AG04450 (cell line): ENCODE measurements at regions of chr11 and their contacts with region 1.

Region 1: GRCh38 chr11:4187055-4187988 is 92.7 kb downstream of the RRM1 start:
- DNase-seq: peak; percentile 49
- H3K4me3 ChIP-seq: peak overlapping the region; percentile 68
- H3K27ac ChIP-seq: no peak overlapping the region
- H3K27me3 ChIP-seq: peaks cover 2% of the 10 kb centered on the region
- CTCF ChIP-seq: peak; percentile 81

Region 2: DNA sequence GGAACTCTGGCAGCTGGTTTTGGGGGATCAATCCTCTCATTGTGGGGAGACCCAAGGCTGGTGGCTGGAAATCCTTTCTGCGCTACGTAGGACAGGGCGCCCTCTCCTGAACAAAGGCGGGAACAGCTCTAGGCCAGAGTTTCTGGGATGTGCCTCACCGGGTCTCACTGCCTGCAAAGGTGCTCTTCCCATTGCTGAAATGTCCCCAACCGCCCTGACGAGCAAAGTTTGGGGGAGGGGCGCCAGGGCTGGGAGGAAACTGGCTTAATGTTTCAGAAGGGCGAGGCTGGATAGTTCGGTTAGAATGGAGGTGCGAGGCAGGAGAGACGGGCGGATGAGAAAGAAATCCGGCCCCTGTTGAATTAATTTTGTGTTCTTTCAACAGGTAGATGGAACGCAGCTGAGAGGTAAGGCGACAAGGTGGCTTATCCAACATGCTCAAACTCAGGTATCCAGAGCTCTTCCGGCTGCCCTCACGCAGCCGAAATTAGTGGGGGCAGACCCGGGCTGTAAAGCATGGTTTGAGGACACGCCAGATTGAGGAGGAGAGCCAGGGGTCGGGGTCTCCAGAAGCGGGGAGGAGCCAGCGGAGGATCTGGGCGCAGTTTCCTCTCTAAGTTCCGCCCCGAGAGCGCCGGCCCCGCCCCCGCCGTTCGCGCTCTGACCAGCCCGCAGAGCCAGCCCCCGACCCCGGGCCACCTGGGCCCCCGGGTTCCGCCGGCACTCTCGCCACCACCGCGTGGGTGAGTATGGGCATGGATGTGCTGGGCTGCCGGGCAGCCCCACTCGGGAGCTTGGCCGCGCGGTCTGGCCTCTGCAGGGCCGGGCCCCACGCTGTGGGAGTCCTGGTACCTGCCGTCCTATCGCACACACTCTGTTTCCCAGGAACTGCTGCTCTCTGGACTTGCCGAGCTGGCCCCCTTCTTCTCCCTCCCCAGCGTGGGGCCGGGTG is 379.1 kb before region 1 on chr11 and contains the start of gene PGAP2:
- CTCF ChIA-PET with region 1: no interaction called
- POLR2A ChIA-PET with region 1: no interaction called
- DNase-seq: no peak
- H3K4me3 ChIP-seq: peak within 1 kb of the TSS; percentile 81
- H3K27ac ChIP-seq: no peak within 1 kb of the TSS
- H3K27me3 ChIP-seq: no peaks in the 10 kb centered on the region
- CTCF ChIP-seq: peak; percentile 82
- polyA plus RNA-seq, gene PGAP2: 20.8 and 26.3 TPM in 2 replicates

Region 3: GRCh38 chr11:4017129-4017528 is 170.2 kb before region 1 on chr11:
- CTCF ChIA-PET with region 1: no interaction called
- POLR2A ChIA-PET with region 1: no interaction called
- DNase-seq: no peak
- H3K4me3 ChIP-seq: no peak overlapping the region
- H3K27ac ChIP-seq: no peak overlapping the region
- H3K27me3 ChIP-seq: no peaks in the 10 kb centered on the region
- CTCF ChIP-seq: no peak

Region 4: DNA sequence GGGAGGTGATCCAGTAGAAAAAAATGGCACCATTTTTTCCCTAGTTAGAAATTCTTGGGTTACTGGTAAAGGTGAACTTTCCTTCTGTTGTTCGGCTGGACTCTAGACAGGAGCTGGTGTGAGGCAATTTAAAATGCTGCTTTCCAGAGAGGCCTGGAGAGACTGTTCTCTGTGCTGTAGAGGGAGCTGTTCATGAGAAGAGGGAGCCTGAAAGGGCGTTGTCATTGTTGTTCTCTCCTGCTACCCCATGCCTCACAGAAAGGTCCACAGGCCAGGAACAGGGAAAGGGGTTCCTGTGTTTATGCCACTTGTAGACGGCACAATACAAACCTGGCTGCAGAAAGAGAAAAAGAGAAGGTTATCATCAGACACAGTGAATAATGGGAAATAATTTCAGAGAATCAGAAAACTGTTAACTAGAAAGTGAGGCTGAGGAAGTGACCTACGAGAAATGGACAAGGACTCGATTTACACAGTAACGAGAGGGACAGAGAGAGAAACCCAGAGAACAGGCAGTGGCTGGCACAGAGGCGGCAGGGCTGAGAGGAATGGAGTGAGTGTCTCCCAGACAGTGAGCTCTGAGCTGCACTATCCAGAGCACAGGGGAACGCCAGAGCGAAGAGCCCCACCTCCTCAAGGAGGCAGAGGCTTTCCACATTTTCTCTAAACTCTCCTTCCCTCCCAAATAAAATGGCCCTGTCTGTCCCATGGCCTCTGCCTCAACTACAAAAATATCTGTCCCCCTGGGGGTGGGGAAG is 16.5 kb after region 1 on chr11:
- CTCF ChIA-PET with region 1: interaction called, 28 read pairs
- POLR2A ChIA-PET with region 1: no interaction called
- DNase-seq: no peak
- H3K4me3 ChIP-seq: no peak overlapping the region
- H3K27ac ChIP-seq: no peak overlapping the region
- H3K27me3 ChIP-seq: no peaks in the 10 kb centered on the region
- CTCF ChIP-seq: 0 out of 2 replicates have a peak, but pooled peaks have one; percentile 11

Region 5: GRCh38 chr11:4381901-4382300 is 194.6 kb after region 1 on chr11:
- CTCF ChIA-PET with region 1: no interaction called
- POLR2A ChIA-PET with region 1: no interaction called
- DNase-seq: no peak
- H3K4me3 ChIP-seq: no peak overlapping the region
- H3K27ac ChIP-seq: no peak overlapping the region
- H3K27me3 ChIP-seq: no peaks in the 10 kb centered on the region
- CTCF ChIP-seq: no peak

Region 6: DNA sequence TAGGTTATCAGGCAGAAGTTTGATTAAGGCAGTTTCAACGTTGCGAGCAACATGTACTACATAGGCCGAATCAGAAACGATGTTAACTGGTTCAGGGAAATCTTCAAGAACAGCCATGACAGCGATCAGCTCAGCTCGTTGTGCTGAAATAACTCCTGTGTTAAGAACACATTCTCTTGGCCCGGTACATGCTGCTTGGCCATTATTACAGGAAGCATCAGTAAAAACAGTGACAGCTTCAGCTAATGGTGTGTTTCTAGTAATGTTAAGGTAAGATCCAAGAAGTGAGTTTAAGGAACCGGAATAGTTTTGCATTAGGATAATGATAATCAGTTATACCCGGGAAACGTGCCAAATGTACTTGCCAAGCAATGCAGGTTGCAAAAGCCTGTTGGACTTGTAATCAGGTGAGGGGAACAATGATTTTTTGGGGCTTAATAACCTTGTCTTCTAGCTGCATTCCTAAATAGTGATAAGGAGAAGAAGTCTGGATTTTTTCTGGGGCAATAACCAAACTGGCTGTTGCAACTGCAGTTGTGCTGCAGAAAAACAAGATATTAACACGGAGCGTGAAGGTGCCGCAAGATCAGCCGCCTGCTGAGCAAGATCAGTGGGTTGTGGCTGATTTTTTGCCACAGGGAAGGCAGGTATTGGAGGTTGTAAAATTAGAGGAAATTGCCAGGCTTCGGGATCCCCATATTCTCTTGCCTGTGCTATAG is 309.4 kb after region 1 on chr11:
- CTCF ChIA-PET with region 1: interaction called, 119 read pairs
- POLR2A ChIA-PET with region 1: interaction called, 3 read pairs
- DNase-seq: no peak
- H3K4me3 ChIP-seq: no peak overlapping the region
- H3K27ac ChIP-seq: no peak overlapping the region
- H3K27me3 ChIP-seq: peaks cover 24% of the 10 kb centered on the region
- CTCF ChIP-seq: no peak

Region 7: DNA sequence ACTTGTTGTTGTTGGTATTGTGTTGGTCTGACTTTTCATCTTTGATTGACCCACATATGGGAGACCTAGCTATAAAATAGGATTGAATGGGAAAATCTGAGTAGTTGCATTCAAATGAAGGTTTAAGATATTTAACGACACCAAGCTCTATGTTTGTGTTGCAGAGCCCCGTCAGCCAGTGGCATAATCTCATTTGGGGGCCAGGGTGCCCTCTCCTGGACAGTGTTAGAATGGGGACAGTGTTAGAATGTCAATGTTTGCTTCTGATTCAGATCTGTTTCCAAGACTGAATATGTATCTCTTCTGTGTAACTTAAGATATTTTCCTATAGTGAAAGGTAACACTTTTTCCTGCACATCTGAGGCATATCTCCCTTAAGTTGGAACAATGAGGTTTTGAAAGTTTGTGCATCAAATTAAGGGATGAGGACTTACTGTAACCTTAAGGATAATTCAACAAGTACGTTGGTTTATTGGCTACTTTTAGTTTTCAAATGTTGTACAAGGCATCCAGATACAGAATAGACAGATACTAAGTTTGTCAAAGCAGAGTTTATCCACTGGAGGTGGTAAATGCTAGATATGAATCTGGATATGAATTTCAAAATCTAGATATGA is 352.4 kb after region 1 on chr11:
- CTCF ChIA-PET with region 1: interaction called, 311 read pairs
- POLR2A ChIA-PET with region 1: no interaction called
- DNase-seq: peak; percentile 4
- H3K4me3 ChIP-seq: no peak overlapping the region
- H3K27ac ChIP-seq: no peak overlapping the region
- H3K27me3 ChIP-seq: no peaks in the 10 kb centered on the region
- CTCF ChIP-seq: peak; percentile 65

Region 8: DNA sequence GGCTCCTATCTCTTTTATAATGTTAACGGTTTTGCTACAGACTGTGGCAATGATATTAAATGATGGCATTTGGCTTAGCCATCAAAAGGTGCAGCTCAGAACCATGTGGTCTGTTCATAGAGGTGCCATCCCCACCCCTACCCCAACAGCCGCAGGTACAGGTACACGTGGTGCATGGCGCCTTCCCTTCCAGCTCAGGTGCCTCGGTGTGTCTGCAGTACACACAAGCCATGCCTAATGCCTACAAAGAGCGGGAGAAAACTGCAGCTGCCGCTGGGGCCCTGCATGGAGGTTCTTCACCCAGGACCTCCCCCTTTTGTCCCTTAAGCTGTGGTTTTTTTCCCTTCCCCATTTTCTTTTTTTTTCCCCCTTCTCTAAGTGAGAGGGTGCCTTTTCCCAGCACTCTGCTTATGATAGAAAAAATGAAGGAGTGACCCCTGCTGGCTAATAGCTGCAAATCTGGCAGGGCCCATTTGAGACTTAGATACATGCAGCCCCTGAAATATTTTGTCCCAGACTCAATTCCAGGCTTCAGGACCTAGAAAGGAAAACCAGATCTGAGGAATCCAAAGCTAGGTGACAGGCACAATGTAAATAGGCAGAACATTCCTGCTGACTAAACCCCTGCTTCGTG is 364.1 kb after region 1 on chr11:
- CTCF ChIA-PET with region 1: interaction called, 33 read pairs
- POLR2A ChIA-PET with region 1: no interaction called
- DNase-seq: no peak
- H3K4me3 ChIP-seq: no peak overlapping the region
- H3K27ac ChIP-seq: no peak overlapping the region
- H3K27me3 ChIP-seq: no peaks in the 10 kb centered on the region
- CTCF ChIP-seq: peak; percentile 51